Dorsolateral prefrontal cortex (tissue), 120 donors: ENCODE measurements at regions of chr1 and their contacts with region 1.

Region 1: GRCh38 chr1:150053926-150054325 is 13.7 kb upstream of the VPS45 start:
- DNase-seq: no peak
- H3K4me3 ChIP-seq: no peak overlapping the region
- H3K27ac ChIP-seq: no peak overlapping the region
- H3K27me3 ChIP-seq: no peaks in the 10 kb centered on the region
- CTCF ChIP-seq: no peak

Region 2: GRCh38 chr1:149962123-149962548 is 91.8 kb before region 1 on chr1:
- intact Hi-C with region 1: loop called (anchors 1 to 2 kb)
- DNase-seq: peak in 4 of 10 donors; percentile 52 to 70 (median 62)
- H3K4me3 ChIP-seq: peak overlapping the region in 2 of 59 donors; percentile 2 to 11
- H3K27ac ChIP-seq: peak overlapping the region in 56 of 59 donors; percentile 24 to 91 (median 78)
- H3K27me3 ChIP-seq: no peaks in the 10 kb centered on the region
- CTCF ChIP-seq: peak; percentile 80 to 97 (median 88)

Region 3: DNA sequence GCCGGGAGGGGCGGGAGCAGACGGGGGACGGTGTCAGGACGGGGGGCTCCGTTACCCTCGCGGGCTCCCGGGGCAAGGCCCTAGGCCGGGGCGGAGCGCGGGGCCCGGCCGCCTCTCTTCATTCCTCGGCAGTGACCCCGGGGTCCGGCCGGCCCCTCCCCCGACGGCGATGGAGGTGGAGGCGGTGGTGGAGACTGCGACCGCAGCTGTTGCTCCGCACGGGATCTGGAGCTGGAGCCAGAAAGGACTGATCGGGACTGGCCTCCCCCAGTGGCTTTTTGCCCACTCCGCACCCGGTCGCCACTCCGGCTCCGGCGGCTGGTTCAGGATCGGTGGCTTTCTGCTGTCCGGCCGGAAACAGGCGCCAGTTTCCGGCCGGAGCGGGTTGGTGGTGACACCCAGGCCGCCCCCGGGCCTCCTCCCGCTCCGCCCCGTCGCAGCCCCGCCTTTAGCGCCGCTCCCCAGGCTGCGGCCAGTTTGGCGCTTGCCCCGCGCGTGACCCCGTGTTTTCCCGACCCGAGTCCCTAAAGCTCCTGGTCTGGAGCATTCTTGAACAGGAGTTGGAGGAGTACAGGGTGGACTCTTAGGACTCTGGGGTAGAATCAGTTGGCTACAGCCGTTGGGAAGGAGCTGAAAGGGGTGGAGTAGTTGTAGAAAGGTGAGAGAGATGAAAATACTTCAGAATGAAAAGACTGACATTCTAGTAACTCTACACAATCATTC is 43.4 kb before region 1 on chr1 and contains the start of gene OTUD7B:
- intact Hi-C with region 1: loop called (anchors 5 kb)
- DNase-seq: peak; percentile 75 to 93 (median 84)
- H3K4me3 ChIP-seq: peak within 1 kb of the TSS; percentile 69 to 97 (median 88)
- H3K27ac ChIP-seq: peak within 1 kb of the TSS; percentile 68 to 100 (median 97)
- H3K27me3 ChIP-seq: no peaks in the 10 kb centered on the region
- CTCF ChIP-seq: peak in 41 of 56 donors; percentile 1 to 54 (median 32)
- total RNA-seq, gene OTUD7B: 28.4 to 126 (median 52.8) TPM

Region 4: DNA sequence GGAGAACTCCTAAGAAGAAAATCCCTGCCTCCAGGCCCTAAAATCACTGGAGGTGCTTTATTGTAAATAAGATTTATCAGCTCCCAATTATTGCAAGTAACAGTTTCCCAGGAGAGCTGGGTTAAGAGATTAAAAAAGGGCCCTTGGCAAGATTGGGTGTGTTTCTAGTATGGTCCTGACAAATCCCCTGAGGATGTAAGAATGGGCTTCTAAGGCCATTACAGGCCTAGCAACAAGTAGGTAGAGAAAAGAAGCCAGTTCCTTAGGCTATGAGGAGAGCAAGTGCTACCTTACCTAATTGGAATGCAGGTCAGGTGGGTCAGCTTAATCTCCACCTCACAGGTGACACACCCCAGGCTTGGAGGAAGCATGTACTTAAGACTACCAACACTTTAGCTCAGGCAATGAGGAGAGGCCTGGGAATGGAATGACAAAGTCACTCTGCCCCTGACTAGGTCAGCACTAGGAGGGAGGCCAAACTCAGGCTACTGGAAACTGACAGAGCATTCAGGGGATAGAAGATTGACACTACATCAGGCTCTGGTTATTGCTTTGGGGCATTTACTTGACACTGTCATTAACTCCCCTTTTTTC is 36.6 kb before region 1 on chr1:
- intact Hi-C with region 1: loop called (anchors 5 kb)
- DNase-seq: no peak
- H3K4me3 ChIP-seq: no peak overlapping the region
- H3K27ac ChIP-seq: peak overlapping the region in 2 of 59 donors; percentile 9 to 29
- H3K27me3 ChIP-seq: no peaks in the 10 kb centered on the region
- CTCF ChIP-seq: no peak

Region 5: GRCh38 chr1:150089846-150090520 is 36.1 kb after region 1 on chr1:
- intact Hi-C with region 1: no loop called
- DNase-seq: no peak
- H3K4me3 ChIP-seq: no peak overlapping the region
- H3K27ac ChIP-seq: peak overlapping the region in 1 of 59 donors; percentile 7
- H3K27me3 ChIP-seq: no peaks in the 10 kb centered on the region
- CTCF ChIP-seq: no peak